GM12878 (cell line): ENCODE measurements at regions of chr6 and their contacts with region 1.

Region 1: DNA sequence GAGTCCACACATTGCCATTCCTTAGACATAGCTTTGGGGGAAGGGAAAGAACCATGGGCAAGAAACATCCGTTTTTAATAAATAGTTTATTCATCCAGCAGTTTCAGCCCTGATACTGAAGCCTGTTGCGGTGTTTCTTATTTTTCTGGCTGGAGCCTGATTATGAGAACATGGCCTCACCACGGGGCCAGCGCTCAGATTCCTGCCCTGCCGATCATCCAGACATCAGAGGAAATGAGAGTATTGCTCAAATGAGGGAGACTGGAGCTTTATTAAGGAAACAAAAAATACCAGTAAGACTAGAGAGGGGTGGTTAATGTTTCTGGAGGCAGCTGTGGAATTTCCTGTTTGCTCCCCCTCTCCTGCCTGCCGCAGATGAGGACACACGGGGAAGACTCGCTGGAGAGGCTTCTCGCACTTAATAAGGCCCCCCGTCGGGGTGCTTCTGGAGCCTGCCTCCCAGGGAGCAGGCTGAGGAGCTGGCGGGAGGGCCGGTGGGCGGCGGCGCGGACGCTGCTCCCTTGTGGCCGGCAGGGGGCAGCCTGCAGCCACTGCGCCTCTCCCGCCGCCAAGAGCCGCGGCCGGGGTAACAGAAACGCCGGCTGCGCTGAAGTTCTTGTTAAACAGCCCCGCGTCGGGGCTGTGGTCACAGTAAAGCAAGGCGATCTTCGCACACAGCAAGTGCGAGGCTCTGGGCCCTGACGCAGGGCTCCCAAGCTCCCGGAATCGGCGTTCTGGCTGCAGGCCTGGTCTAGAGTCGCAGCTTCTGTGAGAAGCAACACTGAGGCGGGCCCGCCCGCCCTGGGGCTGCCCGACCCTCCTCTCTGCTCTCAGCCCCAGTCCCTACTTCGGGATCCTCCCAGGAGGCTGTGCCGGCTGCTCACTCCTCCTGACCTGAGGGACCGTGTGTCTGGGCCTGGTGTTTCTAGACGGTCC is 17.5 kb downstream of the LEMD2 start:
- DNase-seq: no peak
- ATAC-seq: peak; percentile 89
- H3K4me3 ChIP-seq: no peak overlapping the region
- H3K27ac ChIP-seq: no peak overlapping the region
- H3K4me1 ChIP-seq: no peaks in the 10 kb centered on the region; the same call in 1 of the 2 replicates
- H3K27me3 ChIP-seq: no peaks in the 10 kb centered on the region; a peak in 1 of 4 replicates
- CTCF ChIP-seq: peak; percentile 78 to 90 (median 81)
- EP300 ChIP-seq: no peak
- POLR2A ChIP-seq: 0 out of 2 replicates have a peak, but pooled peaks have one; percentile 25
- RAD21 ChIP-seq: peak; percentile 64

Region 2: GRCh38 chr6:33755070-33755869 is 16.1 kb before region 1 on chr6:
- CTCF ChIA-PET with region 1: interaction called, 40 read pairs
- POLR2A ChIA-PET with region 1: no interaction called
- RAD21 ChIA-PET with region 1: no interaction called
- SMC1A ChIA-PET with region 1: no interaction called
- in situ Hi-C with region 1: no loop called
- intact Hi-C with region 1: no loop called
- DNase-seq: no peak
- ATAC-seq: no peak
- H3K4me3 ChIP-seq: no peak overlapping the region
- H3K27ac ChIP-seq: no peak overlapping the region
- H3K4me1 ChIP-seq: peaks cover 11% of the 10 kb centered on the region
- H3K27me3 ChIP-seq: no peaks in the 10 kb centered on the region; a peak in 1 of 4 replicates
- CTCF ChIP-seq: no peak
- EP300 ChIP-seq: no peak
- POLR2A ChIP-seq: no peak
- RAD21 ChIP-seq: no peak

Region 3: GRCh38 chr6:34027445-34027936 is 256.1 kb after region 1 on chr6:
- CTCF ChIA-PET with region 1: interaction called, 49 read pairs
- POLR2A ChIA-PET with region 1: interaction called, 3 read pairs
- RAD21 ChIA-PET with region 1: interaction called, 25 read pairs
- SMC1A ChIA-PET with region 1: interaction called, 9 read pairs
- in situ Hi-C with region 1: no loop called
- intact Hi-C with region 1: loop called (anchors 1 kb)
- DNase-seq: no peak
- ATAC-seq: peak; percentile 90
- H3K4me3 ChIP-seq: no peak overlapping the region
- H3K27ac ChIP-seq: no peak overlapping the region
- H3K4me1 ChIP-seq: peaks cover 6% of the 10 kb centered on the region
- H3K27me3 ChIP-seq: peaks cover 0 to 1% of the 10 kb centered on the region in 2 experiments; a peak in 3 of 4 replicates
- CTCF ChIP-seq: peak; percentile 58 to 84 (median 70)
- EP300 ChIP-seq: no peak
- POLR2A ChIP-seq: no peak
- RAD21 ChIP-seq: peak; percentile 72

Region 4: DNA sequence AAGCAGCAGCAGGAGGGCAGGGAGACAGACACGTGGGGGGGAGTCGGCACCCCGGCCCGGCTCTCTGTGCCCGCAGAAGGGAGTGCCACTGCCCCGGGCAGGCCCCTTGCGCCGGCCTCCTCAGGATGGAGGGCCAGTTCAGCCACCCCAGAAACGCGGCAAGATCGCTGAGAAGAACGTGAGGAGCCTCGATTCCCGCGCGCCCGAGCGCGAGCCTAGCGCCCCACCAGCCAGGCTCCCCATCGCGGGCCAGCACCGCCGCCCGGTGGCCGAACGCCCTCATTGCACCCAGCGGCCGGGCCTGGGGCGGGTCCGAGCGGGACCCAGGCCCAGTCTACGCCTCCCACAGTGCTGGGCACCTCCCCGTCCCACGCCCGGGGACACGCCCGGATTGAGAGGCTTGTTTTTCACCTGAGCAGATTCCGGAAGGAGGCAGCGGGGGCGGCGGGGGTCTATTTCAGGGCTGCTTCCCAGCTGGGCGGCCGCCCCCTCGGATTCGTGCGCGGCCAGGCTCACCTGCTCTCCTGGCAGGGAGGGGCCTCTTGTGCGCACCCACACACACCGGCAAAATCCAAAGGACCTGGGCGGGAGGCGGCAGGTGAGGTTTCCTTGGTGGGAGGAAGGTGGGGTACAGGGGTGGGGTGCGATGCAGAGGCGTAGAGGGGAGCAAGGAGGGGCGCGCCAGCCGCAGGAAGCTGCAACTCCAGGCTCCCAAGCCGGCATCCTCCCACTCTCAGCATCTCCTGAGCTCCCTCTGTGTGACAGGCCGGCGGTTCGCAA is 383.4 kb after region 1 on chr6:
- CTCF ChIA-PET with region 1: interaction called, 22 read pairs
- POLR2A ChIA-PET with region 1: no interaction called
- RAD21 ChIA-PET with region 1: interaction called, 4 read pairs
- SMC1A ChIA-PET with region 1: no interaction called
- in situ Hi-C with region 1: loop called (anchors 5 kb)
- intact Hi-C with region 1: loop called (anchors 1 kb)
- DNase-seq: no peak
- ATAC-seq: peak; percentile 94
- H3K4me3 ChIP-seq: no peak overlapping the region; the same call in 1 of the 2 replicates
- H3K27ac ChIP-seq: no peak overlapping the region
- H3K4me1 ChIP-seq: peaks cover 10% of the 10 kb centered on the region
- H3K27me3 ChIP-seq: peaks cover 3% of the 10 kb centered on the region in 2 experiments; a peak in 3 of 4 replicates
- CTCF ChIP-seq: peak; percentile 91 to 96 (median 96)
- EP300 ChIP-seq: no peak
- POLR2A ChIP-seq: no peak
- RAD21 ChIP-seq: peak; percentile 97